ENCODE measurements at regions of chr16 and their contacts with region 1.

Region 1: DNA sequence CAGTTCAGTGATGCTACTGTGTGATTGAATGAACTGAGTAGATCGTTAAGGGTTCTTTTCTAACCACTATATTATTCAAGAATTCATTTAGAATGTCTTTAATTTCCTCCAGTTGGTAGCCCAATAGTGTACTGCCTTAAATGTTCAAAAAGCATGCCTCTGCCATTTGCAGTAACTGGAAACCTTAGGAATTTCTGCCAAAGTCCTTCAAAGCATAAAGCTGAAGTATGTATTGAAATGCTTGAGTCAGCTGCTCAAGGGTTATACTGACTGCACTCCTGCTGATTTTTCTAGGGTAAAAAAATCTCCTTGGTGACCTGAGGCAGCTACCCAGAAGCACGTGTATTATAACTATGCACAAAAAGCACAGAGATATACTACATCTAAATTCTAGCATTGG is 56.5 kb downstream of the SNTB2 start:
- DNase-seq: no peak
- H3K4me3 ChIP-seq: no peak overlapping the region
- H3K27me3 ChIP-seq: no peaks in the 10 kb centered on the region
- CTCF ChIP-seq: no peak

Region 2: DNA sequence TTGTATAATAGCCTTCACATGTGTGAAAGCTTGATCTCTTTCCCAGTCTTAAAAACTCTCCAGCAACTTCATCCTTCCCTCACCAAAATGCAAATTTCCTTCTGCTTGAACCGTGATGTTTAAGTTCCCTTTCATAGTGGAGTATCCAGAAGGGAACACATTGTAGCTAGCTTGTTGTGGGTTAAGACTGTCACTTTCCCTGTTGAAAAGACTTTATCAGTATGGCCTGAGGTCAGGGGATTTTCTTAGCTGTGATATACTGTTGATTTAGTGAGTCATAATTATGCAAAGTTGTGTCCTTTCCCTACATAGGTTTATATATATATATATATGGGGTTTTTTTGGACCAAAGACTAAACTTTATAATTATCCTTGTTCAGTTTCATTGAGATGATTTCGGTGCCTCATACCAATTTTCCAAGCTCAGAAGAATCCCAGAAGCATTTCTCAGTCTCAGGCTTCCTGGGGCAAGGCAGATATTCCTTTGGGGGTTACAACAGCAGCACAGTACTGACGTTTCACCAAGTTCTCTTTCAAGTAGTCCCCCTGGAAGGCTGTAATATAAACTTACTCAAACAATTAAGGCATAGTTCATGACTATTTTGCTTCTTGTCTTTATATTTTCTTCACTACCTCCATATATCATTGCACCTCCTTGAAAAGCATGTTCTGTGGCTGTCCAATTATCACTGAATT is 1043.2 kb before region 1 on chr16:
- CTCF ChIA-PET with region 1: no interaction called
- POLR2A ChIA-PET with region 1: interaction called, 10 read pairs
- DNase-seq: no peak
- H3K4me3 ChIP-seq: no peak overlapping the region
- H3K27me3 ChIP-seq: no peaks in the 10 kb centered on the region
- CTCF ChIP-seq: no peak

Region 3: GRCh38 chr16:69253870-69254341 is 10.4 kb after region 1 on chr16:
- CTCF ChIA-PET with region 1: no interaction called
- POLR2A ChIA-PET with region 1: no interaction called
- DNase-seq: no peak
- H3K4me3 ChIP-seq: no peak overlapping the region
- H3K27me3 ChIP-seq: no peaks in the 10 kb centered on the region
- CTCF ChIP-seq: no peak

Measured in BJ (cell line).